A549 (cell line): ENCODE measurements at regions of chr9 and their contacts with region 1.

Region 1: GRCh38 chr9:121278535-121279261 is 10.7 kb downstream of the GSN start:
- DNase-seq: peak in 1 of 2 experiments; percentile 75
- ATAC-seq: peak; percentile 75 to 87
- H3K4me3 ChIP-seq: no peak overlapping the region
- H3K27ac ChIP-seq: peak overlapping the region; percentile 58 to 83
- H3K4me1 ChIP-seq: peaks cover 57% of the 10 kb centered on the region
- CTCF ChIP-seq: peak; percentile 88
- EP300 ChIP-seq: no peak
- POLR2A ChIP-seq: no peak
- RAD21 ChIP-seq: peak; percentile 80 to 85

Region 2: GRCh38 chr9:121055642-121056143 is 223.0 kb before region 1 on chr9:
- CTCF ChIA-PET with region 1: no interaction called
- POLR2A ChIA-PET with region 1: no interaction called
- DNase-seq: peak; percentile 44 to 74
- ATAC-seq: peak; percentile 87 to 95
- H3K4me3 ChIP-seq: no peak overlapping the region
- H3K27ac ChIP-seq: peak overlapping the region in 1 of 2 experiments; percentile 58; a peak in 3 of 6 replicates
- H3K4me1 ChIP-seq: peaks cover 40% of the 10 kb centered on the region
- CTCF ChIP-seq: peak; percentile 41
- EP300 ChIP-seq: no peak
- POLR2A ChIP-seq: no peak
- RAD21 ChIP-seq: peak; percentile 53 to 77

Region 3: GRCh38 chr9:121261107-121261460 is 17.6 kb before region 1 on chr9:
- CTCF ChIA-PET with region 1: interaction called, 17 read pairs
- POLR2A ChIA-PET with region 1: no interaction called
- DNase-seq: no peak
- ATAC-seq: peak; percentile 56 to 57; a peak in 3 of 6 replicates
- H3K4me3 ChIP-seq: no peak overlapping the region
- H3K27ac ChIP-seq: no peak overlapping the region
- H3K4me1 ChIP-seq: no peaks in the 10 kb centered on the region
- CTCF ChIP-seq: no peak
- EP300 ChIP-seq: no peak
- POLR2A ChIP-seq: no peak
- RAD21 ChIP-seq: no peak

Region 4: DNA sequence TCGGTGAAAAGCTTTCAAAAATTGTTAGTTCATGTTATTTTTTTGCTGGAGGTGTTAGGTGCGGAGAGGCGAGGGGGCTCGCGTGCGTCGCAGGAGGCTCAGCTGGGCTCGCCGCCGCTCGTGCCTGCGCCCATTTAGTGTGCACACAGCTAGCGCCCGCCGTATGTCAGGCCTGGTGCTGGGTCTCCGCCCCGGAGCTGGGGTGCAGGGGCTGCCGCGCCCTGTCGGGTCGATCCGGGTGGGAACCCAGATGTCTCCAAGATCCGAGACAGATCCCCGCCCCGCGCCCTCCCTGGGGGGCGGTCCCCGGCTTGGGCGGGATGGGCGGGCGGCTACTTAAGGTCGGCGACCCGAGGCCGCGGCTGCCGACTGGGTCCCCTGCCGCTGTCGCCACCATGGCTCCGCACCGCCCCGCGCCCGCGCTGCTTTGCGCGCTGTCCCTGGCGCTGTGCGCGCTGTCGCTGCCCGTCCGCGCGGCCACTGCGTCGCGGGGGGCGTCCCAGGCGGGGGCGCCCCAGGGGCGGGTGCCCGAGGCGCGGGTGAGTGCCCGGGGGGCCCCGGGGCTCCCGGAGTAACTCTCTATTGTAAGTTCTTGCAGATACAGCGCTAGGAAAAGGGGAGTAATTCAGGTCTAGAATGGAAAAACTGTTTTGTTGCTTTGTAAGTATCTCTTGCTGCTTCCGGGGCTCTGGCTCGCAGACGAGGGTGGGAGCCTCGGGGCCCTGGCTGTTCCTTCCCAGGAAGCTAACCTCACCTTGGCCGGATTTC is 21.0 kb after region 1 on chr9:
- CTCF ChIA-PET with region 1: interaction called, 20 read pairs
- POLR2A ChIA-PET with region 1: no interaction called
- DNase-seq: no peak
- ATAC-seq: peak; percentile 60 to 65; a peak in 5 of 6 replicates
- H3K4me3 ChIP-seq: peak overlapping the region; percentile 60
- H3K27ac ChIP-seq: peak overlapping the region; percentile 68 to 84
- H3K4me1 ChIP-seq: peaks cover 38% of the 10 kb centered on the region
- CTCF ChIP-seq: no peak; the same call in 2 of the 3 replicates
- EP300 ChIP-seq: no peak
- POLR2A ChIP-seq: no peak
- RAD21 ChIP-seq: no peak

Region 5: DNA sequence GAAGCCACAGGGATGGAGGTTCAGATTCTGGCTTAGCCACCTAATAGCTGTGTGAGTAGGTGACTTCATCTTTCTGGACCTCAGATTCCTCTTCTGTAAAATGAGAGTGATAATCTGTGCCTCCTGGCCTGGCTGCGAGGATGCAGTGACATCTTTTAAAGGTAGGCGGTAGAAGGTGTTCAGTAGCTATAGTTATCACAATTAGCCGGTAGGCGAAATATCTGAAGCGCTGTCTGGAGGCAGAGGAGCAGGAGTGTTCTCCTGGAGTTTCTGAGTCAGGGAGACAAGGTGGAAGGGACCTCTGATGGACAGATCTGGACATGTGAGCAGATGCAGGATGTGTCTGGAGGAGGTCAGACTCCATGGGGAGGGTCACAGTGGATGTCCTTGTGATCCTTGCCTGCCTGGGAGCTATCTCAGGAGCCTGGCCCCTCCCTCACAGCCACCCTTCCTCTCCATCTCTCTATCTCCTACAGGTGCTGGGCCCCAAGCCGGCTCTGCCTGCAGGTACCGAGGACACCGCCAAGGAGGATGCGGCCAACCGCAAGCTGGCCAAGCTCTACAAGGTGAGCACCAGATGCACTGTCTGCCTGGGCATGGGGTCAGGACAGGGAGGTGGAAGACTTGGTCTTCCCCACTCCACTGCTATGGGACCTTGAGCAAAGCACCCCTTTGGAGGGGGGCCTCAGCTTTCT is 34.9 kb after region 1 on chr9:
- CTCF ChIA-PET with region 1: interaction called, 72 read pairs
- POLR2A ChIA-PET with region 1: no interaction called
- DNase-seq: no peak
- ATAC-seq: no peak
- H3K4me3 ChIP-seq: no peak overlapping the region
- H3K27ac ChIP-seq: no peak overlapping the region
- H3K4me1 ChIP-seq: peaks cover 12% of the 10 kb centered on the region; the same call in 2 of the 3 replicates
- CTCF ChIP-seq: no peak
- EP300 ChIP-seq: no peak
- POLR2A ChIP-seq: no peak
- RAD21 ChIP-seq: no peak